Posterior vena cava (tissue), 2 donors: ENCODE measurements at regions of chr18 and their contacts with region 1.

Region 1: DNA sequence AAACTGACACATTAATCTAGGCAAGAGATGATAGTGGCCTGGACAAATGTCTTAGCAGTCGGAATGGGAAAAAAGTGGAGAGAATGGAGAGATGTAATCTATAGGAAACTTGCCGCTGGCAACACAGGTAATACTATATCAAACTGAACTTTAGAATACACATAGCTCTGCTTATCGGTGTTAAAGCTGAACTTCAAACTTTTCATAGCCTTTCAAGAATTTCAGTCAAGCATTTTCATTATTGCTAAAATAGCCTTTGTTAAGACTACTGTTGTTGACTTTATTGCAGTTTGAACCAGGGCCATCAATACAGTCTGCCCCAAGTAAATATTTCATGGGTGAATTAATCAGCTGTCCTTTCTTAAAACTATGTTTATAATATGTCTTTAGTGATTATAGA is 12.9 kb upstream of the CHST9 start:
- DNase-seq: no peak

Region 2: GRCh38 chr18:26642440-26643348 is 555.3 kb before region 1 on chr18:
- intact Hi-C with region 1: no loop called
- DNase-seq: no peak

Region 3: DNA sequence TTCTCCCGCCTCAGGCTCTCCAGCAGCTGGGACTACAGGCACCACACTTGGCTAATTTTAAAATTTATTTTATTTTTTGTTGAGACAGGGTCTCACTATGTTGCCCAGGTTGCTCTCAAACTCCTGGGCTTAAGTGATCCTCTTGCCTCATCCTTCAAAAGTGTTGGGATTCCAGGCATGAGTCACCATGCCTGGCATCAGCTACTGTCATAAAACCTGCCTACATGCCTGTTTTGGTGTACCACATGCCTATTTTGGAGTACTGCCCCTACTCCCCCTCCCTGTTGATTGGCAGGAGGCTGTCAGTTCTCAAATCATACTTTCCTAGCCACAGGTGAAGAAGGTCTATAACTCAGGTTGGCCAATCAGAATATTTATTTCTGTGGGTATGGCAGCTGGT is 76.9 kb before region 1 on chr18:
- intact Hi-C with region 1: no loop called
- DNase-seq: no peak

Region 4: DNA sequence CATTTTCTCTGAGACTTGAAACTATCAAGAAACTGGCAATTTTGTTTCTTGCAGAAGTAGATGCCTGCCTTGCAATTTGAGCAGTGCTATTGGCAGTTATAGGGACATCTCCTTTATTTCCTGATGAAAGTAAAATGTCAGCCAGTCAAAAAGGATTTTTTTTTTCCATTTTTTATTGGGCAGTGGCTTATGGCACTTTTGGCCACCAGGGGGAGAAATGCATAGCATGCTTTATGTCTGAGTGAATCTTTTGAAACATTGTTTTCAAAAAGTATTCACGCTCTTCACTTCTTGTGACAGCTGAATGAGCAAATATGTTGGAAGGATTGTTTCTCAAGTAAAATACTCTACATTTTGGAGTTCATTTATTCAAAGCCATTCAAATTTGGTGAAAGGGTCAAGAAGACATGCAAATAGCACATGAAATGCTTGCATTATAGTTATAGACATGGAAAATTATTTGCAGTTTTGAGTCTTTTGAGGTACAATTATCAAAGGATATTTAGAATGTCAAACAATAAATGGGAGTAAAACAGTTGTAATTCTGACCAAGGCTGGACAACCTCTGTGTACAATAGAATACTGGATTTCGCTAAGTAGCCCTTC is 487.9 kb after region 1 on chr18:
- intact Hi-C with region 1: loop called in 1 of 2 experiments (anchors 10 kb)
- DNase-seq: no peak